Endothelial cell of umbilical vein (primary cell): ENCODE measurements at regions of chr1 and their contacts with region 1.

Region 1: DNA sequence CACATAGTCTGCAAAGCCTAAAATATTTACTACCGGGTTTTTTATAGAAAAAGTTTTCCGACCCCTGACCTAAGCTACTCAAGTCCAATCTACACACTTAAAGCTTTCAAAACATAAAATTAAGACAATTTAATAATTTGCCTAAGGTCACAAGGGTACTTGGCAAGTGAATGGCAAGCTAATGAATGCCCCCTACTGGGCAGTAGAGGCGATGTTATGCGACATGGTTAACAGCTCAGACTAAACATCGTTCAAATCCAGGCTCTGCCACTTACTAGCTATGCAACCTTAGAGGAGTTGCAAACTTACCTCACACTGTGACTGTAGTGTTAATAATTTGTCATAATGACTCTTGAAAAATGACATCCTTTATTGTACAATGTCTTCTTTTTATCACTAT is 317.2 kb upstream of the NFIA start:
- DNase-seq: peak; percentile 49
- H3K4me3 ChIP-seq: no peak overlapping the region
- H3K27ac ChIP-seq: no peak overlapping the region
- H3K4me1 ChIP-seq: peaks cover 13% of the 10 kb centered on the region
- H3K27me3 ChIP-seq: no peaks in the 10 kb centered on the region
- CTCF ChIP-seq: peak; percentile 44 to 51
- POLR2A ChIP-seq: no peak

Region 2: DNA sequence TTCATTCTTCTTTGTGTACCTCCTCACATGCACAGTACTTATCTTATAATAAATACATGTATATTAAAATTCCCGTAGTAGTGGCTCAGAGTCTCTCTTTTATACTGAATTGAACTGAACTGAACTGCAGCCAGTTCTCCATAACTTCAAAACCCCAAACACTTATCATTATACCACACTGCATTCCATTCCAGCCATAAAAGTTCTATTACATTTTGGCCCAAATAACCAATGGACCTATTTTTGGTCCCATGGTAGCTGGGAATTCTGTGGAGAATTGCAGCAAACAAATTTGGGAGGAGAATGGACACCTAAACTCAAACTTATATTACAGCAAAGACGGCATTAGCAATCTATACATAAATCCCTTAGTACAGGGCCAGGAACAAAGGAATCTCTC is 605.1 kb before region 1 on chr1:
- CTCF ChIA-PET with region 1: interaction called, 18 read pairs
- POLR2A ChIA-PET with region 1: no interaction called
- dilution Hi-C with region 1: no loop called
- intact Hi-C with region 1: loop called (anchors 1 kb)
- DNase-seq: no peak
- H3K4me3 ChIP-seq: no peak overlapping the region
- H3K27ac ChIP-seq: no peak overlapping the region
- H3K4me1 ChIP-seq: no peaks in the 10 kb centered on the region
- H3K27me3 ChIP-seq: no peaks in the 10 kb centered on the region
- CTCF ChIP-seq: no peak
- POLR2A ChIP-seq: no peak

Region 3: DNA sequence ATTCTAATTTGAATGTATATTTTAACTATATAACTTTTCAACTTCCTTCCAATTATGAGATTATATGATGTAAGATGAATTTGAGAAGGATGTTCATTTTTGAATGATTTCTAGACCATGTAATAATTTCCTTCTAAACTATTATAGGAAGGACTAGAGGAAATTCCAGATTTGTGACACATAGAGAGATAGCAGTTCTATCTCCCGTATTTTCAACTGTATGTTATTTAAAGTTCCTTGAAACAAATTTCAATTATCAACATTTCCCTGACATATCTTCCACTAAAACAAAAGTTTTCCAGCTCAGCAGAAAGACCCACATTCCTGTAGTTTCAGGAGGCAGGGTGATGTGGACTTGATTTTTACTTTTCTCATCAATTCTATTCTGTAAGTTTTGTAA is 295.0 kb before region 1 on chr1:
- CTCF ChIA-PET with region 1: no interaction called
- POLR2A ChIA-PET with region 1: no interaction called
- dilution Hi-C with region 1: no loop called
- intact Hi-C with region 1: loop called (anchors 2 kb)
- DNase-seq: peak; percentile 66
- H3K4me3 ChIP-seq: no peak overlapping the region
- H3K27ac ChIP-seq: peak overlapping the region; percentile 82
- H3K4me1 ChIP-seq: peaks cover 27% of the 10 kb centered on the region
- H3K27me3 ChIP-seq: no peaks in the 10 kb centered on the region
- CTCF ChIP-seq: no peak
- POLR2A ChIP-seq: no peak

Region 4: GRCh38 chr1:60573726-60574409 is 191.3 kb before region 1 on chr1:
- CTCF ChIA-PET with region 1: interaction called, 7 read pairs
- POLR2A ChIA-PET with region 1: no interaction called
- dilution Hi-C with region 1: no loop called
- intact Hi-C with region 1: loop called (anchors 5 kb)
- DNase-seq: peak; percentile 86
- H3K4me3 ChIP-seq: no peak overlapping the region
- H3K27ac ChIP-seq: peak overlapping the region; percentile 58
- H3K4me1 ChIP-seq: peaks cover 18% of the 10 kb centered on the region
- H3K27me3 ChIP-seq: no peaks in the 10 kb centered on the region
- CTCF ChIP-seq: no peak
- POLR2A ChIP-seq: peak; percentile 35

Region 5: GRCh38 chr1:60621368-60621851 is 143.8 kb before region 1 on chr1:
- CTCF ChIA-PET with region 1: no interaction called
- POLR2A ChIA-PET with region 1: no interaction called
- dilution Hi-C with region 1: no loop called
- intact Hi-C with region 1: loop called (anchors 5 kb)
- DNase-seq: peak; percentile 90
- H3K4me3 ChIP-seq: no peak overlapping the region
- H3K27ac ChIP-seq: peak overlapping the region; percentile 46
- H3K4me1 ChIP-seq: peaks cover 29% of the 10 kb centered on the region
- H3K27me3 ChIP-seq: no peaks in the 10 kb centered on the region
- CTCF ChIP-seq: no peak
- POLR2A ChIP-seq: no peak

Region 6: DNA sequence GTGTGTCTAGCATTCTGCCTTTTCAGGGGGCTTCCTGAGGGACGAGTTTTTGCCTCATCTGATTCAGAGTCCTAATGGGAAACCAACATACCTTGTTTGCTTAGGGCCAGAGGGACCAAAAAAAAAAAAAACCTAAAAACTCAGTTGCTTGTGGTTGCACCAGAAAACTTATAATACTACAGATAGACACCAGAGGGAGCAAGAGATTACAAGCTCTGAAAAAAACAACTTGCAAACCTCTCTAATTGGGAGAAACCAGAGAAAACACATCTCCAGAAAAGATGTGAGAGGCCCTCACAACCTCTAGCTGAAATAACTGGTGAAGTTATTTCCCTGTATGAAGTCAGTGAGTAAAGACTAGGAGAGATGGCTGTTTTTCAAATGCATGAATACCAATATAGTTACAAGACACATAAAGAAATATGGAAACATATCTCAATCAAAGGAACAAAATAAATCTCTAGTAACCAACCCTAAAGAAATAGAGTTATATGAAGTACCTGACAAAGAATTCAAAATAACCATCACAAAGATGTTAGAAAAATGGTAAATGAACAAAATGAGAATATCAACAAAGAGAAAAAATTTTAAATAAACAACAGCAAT is 83.5 kb after region 1 on chr1:
- CTCF ChIA-PET with region 1: interaction called, 12 read pairs
- POLR2A ChIA-PET with region 1: no interaction called
- dilution Hi-C with region 1: no loop called
- intact Hi-C with region 1: no loop called
- DNase-seq: peak; percentile 79
- H3K4me3 ChIP-seq: no peak overlapping the region
- H3K27ac ChIP-seq: no peak overlapping the region
- H3K4me1 ChIP-seq: no peaks in the 10 kb centered on the region
- H3K27me3 ChIP-seq: no peaks in the 10 kb centered on the region
- CTCF ChIP-seq: peak; percentile 35 to 45
- POLR2A ChIP-seq: no peak

Region 7: DNA sequence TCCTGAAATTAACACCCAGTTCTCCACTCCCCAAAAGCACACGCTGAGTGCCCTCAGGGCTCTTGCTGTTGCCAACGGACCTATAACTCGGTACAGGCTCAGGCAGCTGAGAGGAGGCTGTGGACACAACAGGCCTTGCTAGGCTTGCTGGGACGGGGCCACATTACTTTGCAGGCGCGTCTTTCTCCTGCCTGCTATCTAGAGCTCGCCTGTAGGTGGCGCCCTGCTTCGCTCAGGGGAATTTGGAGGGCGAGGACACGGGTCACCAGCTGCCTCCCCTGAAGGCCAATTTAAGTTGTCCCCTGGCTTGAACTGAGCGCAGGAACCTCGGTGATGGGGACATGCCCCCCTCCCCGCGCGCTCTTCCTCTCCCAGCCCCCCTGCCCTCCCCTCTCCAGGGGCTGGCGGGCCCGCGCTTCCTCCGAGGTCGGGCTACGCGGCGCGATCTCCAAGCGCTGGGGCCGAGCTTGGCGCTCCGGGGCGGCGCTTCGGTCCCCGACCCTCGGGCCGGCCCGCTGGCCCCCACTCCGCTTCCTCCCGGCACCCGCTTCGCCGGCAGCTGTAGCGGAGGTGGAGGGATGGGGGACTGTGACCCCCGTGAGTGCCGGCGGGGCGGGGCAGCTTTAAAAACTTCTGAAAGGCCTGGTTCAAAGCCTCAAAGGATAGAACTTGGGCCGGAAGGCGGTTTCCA is 284.8 kb after region 1 on chr1:
- CTCF ChIA-PET with region 1: no interaction called
- POLR2A ChIA-PET with region 1: no interaction called
- dilution Hi-C with region 1: no loop called
- intact Hi-C with region 1: loop called (anchors 10 kb)
- DNase-seq: peak; percentile 93
- H3K4me3 ChIP-seq: peak overlapping the region; percentile 62 to 95 (median 92)
- H3K27ac ChIP-seq: peak overlapping the region; percentile 84
- H3K4me1 ChIP-seq: peaks cover 16% of the 10 kb centered on the region
- H3K27me3 ChIP-seq: no peaks in the 10 kb centered on the region
- CTCF ChIP-seq: peak; percentile 89 to 96
- POLR2A ChIP-seq: peak; percentile 40

Region 8: DNA sequence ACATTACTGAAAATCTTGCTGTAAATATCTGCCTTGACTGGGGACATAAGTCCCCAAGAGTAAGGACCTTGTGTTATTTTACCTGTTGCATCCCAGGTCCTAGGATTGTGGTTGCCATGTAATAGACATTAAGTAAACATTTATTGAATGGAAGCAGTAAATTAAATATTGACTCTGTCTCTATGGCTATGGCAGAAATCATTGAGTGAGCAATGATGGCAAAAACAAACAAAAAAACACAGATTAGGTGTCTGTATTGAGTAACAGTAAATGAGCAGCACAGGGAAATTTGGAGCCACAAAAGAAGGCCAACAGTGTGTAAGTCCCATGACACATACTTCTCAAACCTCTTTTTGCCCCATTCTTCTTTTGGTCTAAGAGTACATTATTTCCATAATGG is 557.6 kb after region 1 on chr1:
- CTCF ChIA-PET with region 1: no interaction called
- POLR2A ChIA-PET with region 1: no interaction called
- dilution Hi-C with region 1: no loop called
- intact Hi-C with region 1: no loop called
- DNase-seq: no peak
- H3K4me3 ChIP-seq: no peak overlapping the region
- H3K27ac ChIP-seq: no peak overlapping the region
- H3K4me1 ChIP-seq: peaks cover 14% of the 10 kb centered on the region
- H3K27me3 ChIP-seq: no peaks in the 10 kb centered on the region
- CTCF ChIP-seq: no peak
- POLR2A ChIP-seq: no peak